Astrocyte of the cerebellum (primary cell): ENCODE measurements at regions of chr14 and their contacts with region 1.

Region 1: DNA sequence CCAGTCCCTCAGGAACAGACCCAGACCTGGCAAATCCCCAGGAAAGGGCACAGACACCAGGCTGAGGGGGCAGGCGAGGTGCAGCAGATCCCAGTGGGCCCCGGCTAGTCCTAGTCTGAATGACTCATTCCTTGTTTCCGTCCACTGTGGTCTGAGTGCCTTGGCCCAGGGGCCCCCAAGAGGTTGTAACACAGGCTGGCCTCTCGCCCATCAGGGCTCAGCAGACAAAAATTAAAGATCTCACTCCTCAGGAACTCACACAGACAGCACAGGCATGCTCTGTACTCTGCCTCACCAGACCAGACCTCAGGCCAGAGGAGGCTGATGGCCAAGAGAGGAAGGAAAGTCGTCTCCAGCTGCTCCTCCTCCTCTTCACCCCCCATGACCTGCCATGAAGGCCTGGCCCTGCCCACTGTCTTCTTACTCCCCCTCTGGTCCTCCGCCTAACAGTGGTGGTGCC is 7.7 kb upstream of the LTBP2 start:
- DNase-seq: peak; percentile 95
- H3K4me3 ChIP-seq: no peak overlapping the region
- CTCF ChIP-seq: no peak

Region 2: DNA sequence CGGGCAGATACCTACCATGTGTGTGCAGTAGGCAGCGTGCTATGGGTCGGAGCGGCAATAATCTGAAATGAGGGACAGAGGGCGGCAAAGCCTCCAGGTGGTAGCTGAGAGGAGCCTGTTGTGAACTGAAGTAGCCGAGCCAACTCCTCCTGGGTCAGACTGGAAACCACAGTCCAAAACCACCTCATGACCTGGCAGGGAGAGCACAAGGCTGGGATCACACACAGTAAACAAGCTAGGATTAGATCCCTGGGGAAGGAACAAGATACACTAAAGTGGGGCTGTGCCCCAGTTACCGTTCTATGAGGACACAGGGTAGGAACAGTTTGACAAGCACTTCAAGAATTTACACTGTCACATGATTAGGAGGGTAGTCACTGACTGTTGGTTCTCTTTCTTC is 44.2 kb after region 1 on chr14:
- in situ Hi-C with region 1: loop called (anchors 5 kb)
- DNase-seq: no peak
- H3K4me3 ChIP-seq: no peak overlapping the region
- CTCF ChIP-seq: no peak